ENCODE measurements at regions of chr11 and their contacts with region 1.

Region 1: GRCh38 chr11:77127232-77127911 is 674 bp upstream of the MYO7A start:
- DNase-seq: peak; percentile 71 to 85 (median 81)
- H3K4me3 ChIP-seq: peak overlapping the region; percentile 41
- H3K27ac ChIP-seq: peak overlapping the region; percentile 50 to 59
- H3K4me1 ChIP-seq: peaks cover 14% of the 10 kb centered on the region
- H3K27me3 ChIP-seq: no peaks in the 10 kb centered on the region
- CTCF ChIP-seq: peak; percentile 99 to 100 (median 99)
- EP300 ChIP-seq: no peak
- POLR2A ChIP-seq: no peak

Region 2: DNA sequence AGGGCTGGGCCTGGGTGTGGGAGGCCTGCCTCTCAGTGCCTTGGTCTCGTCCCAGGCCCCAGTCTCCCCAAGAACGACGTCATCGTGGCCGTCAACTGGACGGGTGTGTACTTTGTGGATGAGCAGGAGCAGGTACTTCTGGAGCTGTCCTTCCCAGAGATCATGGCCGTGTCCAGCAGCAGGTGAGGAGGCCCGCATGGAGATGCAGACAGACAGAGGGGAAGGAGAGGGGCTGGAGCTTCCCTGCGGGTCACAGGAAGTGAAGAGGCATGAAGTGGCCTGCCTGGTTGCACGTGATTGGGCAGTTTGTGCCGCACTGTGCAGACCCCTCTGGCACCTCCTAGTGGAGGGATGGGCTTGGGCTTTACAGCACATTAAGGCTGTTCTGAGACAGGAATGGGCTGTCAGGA is 71.1 kb after region 1 on chr11:
- intact Hi-C with region 1: no loop called
- DNase-seq: peak in 4 of 5 donors; percentile 3 to 26 (median 12)
- H3K4me3 ChIP-seq: no peak overlapping the region
- H3K27ac ChIP-seq: no peak overlapping the region
- H3K4me1 ChIP-seq: no peaks in the 10 kb centered on the region
- H3K27me3 ChIP-seq: no peaks in the 10 kb centered on the region
- CTCF ChIP-seq: no peak
- EP300 ChIP-seq: no peak
- POLR2A ChIP-seq: no peak

Region 3: GRCh38 chr11:77473801-77474683 is 346.7 kb after region 1 on chr11 and contains the start of gene PAK1:
- intact Hi-C with region 1: loop called in 1 of 4 experiments (anchors 10 kb)
- DNase-seq: peak; percentile 94 to 97 (median 96)
- H3K4me3 ChIP-seq: peak within 1 kb of the TSS; percentile 67
- H3K27ac ChIP-seq: peak within 1 kb of the TSS; percentile 86 to 90
- H3K4me1 ChIP-seq: peaks cover 5% of the 10 kb centered on the region
- H3K27me3 ChIP-seq: no peaks in the 10 kb centered on the region
- CTCF ChIP-seq: peak in 1 of 3 donors; percentile 53
- EP300 ChIP-seq: no peak
- POLR2A ChIP-seq: peak; percentile 41
- total RNA-seq, gene PAK1: 31.2 to 48.1 (median 42.3) TPM

Region 4: GRCh38 chr11:77547863-77548551 is 420.6 kb after region 1 on chr11:
- intact Hi-C with region 1: loop called in 2 of 4 experiments (anchors 10 kb)
- DNase-seq: peak in 2 of 5 donors; percentile 20 to 59
- H3K4me3 ChIP-seq: no peak overlapping the region
- H3K27ac ChIP-seq: peak overlapping the region; percentile 11 to 39
- H3K4me1 ChIP-seq: peaks cover 2% of the 10 kb centered on the region
- H3K27me3 ChIP-seq: no peaks in the 10 kb centered on the region
- CTCF ChIP-seq: peak; percentile 65 to 75 (median 73)
- EP300 ChIP-seq: no peak
- POLR2A ChIP-seq: no peak

Region 5: DNA sequence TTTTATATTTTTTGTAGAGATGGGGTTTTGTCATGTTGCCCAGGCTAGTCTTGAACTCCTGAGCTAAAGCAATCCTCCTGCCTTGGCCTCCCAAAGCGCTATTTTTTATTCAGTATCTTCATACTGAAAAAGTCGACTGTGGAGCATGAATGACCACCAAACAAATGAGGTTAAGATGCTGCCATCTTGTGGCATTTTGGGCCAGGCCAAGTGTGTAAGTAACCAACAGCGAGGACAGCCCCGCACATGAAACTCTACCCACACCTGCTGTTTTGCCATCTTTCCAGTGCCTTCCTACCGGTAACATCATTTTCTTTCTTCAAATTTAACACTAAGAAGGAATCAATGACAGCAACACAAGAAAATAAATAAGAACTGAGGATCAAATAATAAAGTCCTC is 430.2 kb after region 1 on chr11:
- intact Hi-C with region 1: loop called in 1 of 4 experiments (anchors 10 kb)
- DNase-seq: no peak
- H3K4me3 ChIP-seq: no peak overlapping the region
- H3K27ac ChIP-seq: no peak overlapping the region
- H3K4me1 ChIP-seq: no peaks in the 10 kb centered on the region
- H3K27me3 ChIP-seq: no peaks in the 10 kb centered on the region
- CTCF ChIP-seq: no peak
- EP300 ChIP-seq: no peak
- POLR2A ChIP-seq: no peak

Region 6: GRCh38 chr11:77619576-77620198 is 492.3 kb after region 1 on chr11:
- intact Hi-C with region 1: loop called in 1 of 4 experiments (anchors 5 kb)
- DNase-seq: no peak
- H3K4me3 ChIP-seq: no peak overlapping the region
- H3K27ac ChIP-seq: no peak overlapping the region
- H3K4me1 ChIP-seq: peaks cover 2% of the 10 kb centered on the region
- H3K27me3 ChIP-seq: no peaks in the 10 kb centered on the region
- CTCF ChIP-seq: peak; percentile 33 to 74 (median 68)
- EP300 ChIP-seq: no peak
- POLR2A ChIP-seq: no peak